ENCODE measurements at regions of chr3 and their contacts with region 1.

Region 1: GRCh38 chr3:151660885-151661284 is 72.8 kb upstream of the AADACL2 start:
- DNase-seq: no peak
- ATAC-seq: no peak
- H3K4me3 ChIP-seq: no peak overlapping the region
- H3K27ac ChIP-seq: no peak overlapping the region
- H3K4me1 ChIP-seq: no peaks in the 10 kb centered on the region
- H3K27me3 ChIP-seq: no peaks in the 10 kb centered on the region

Region 2: DNA sequence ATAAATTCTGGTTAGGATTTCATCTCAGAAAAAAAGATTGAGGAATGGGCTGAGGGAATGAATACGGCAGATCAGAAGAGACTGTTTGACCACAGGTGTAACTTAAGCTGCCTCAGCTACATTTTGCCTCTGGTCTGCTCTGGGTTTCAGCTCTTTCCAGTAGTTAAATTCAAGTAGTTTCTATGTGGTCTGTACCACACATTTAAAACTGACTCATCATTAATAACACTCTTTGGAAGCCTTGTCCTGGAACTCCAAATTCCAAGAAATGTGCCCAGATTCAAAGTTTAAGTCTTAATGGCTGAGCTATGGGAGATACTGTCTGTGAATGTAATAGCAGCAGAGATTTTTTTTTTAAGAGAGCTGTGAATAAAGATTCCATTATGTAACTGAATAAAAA is 67.0 kb before region 1 on chr3:
- intact Hi-C with region 1: loop called in 1 of 4 experiments (anchors 10 kb)
- DNase-seq: no peak
- ATAC-seq: no peak
- H3K4me3 ChIP-seq: no peak overlapping the region
- H3K27ac ChIP-seq: no peak overlapping the region
- H3K4me1 ChIP-seq: no peaks in the 10 kb centered on the region
- H3K27me3 ChIP-seq: no peaks in the 10 kb centered on the region

Region 3: DNA sequence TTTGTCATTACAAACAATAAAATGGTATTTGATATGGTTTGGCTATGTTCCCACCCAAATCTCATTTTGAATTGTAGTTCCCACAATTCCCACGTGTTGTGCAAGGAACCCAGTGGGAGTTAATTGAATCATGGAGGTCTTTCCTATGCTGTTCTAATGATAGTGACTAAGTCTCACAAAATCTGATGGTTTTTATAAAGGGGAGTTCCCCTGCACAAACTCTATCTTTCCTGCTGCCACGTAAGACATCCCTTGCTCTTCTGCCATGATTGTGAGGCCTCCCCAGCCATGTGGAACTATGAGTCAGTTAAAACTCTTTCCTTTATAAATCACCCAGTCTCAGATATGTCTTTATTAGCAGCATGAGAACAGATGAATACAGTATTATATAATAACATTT is 137.6 kb after region 1 on chr3:
- intact Hi-C with region 1: no loop called
- DNase-seq: no peak
- ATAC-seq: no peak
- H3K4me3 ChIP-seq: no peak overlapping the region
- H3K27ac ChIP-seq: no peak overlapping the region
- H3K4me1 ChIP-seq: no peaks in the 10 kb centered on the region
- H3K27me3 ChIP-seq: no peaks in the 10 kb centered on the region

Region 4: DNA sequence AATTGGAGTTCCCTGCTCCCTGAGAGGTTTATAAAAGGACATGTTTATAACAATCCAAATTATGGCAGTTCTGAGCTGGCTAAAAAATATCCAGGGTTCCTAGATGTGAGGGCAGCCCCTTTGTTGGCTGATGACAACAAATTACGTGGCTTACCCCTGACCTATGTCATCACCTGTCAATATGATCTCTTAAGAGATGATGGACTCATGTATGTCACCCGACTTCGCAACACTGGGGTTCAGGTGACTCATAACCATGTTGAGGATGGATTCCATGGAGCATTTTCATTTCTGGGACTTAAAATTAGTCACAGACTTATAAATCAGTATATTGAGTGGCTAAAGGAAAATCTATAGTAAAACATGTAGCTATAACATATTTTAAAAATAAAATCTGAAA is 166.9 kb after region 1 on chr3:
- intact Hi-C with region 1: no loop called
- DNase-seq: no peak
- ATAC-seq: no peak
- H3K4me3 ChIP-seq: no peak overlapping the region
- H3K27ac ChIP-seq: no peak overlapping the region
- H3K4me1 ChIP-seq: no peaks in the 10 kb centered on the region
- H3K27me3 ChIP-seq: no peaks in the 10 kb centered on the region